ENCODE measurements at regions of chr22 and their contacts with region 1.

Region 1: GRCh38 chr22:35627264-35628041 is 10.3 kb upstream of the MB start:
- DNase-seq: peak; percentile 87
- ATAC-seq: peak; percentile 72 to 79

Region 2: GRCh38 chr22:35742342-35743100 is 115.1 kb after region 1 on chr22:
- intact Hi-C with region 1: loop called in 1 of 2 experiments (anchors 5 kb)
- DNase-seq: no peak
- ATAC-seq: peak; percentile 25 to 76

Region 3: GRCh38 chr22:35840302-35840739 is 212.9 kb after region 1 on chr22:
- intact Hi-C with region 1: loop called in 1 of 2 experiments (anchors 10 kb)
- DNase-seq: peak; percentile 89
- ATAC-seq: peak; percentile 87 to 94

Region 4: DNA sequence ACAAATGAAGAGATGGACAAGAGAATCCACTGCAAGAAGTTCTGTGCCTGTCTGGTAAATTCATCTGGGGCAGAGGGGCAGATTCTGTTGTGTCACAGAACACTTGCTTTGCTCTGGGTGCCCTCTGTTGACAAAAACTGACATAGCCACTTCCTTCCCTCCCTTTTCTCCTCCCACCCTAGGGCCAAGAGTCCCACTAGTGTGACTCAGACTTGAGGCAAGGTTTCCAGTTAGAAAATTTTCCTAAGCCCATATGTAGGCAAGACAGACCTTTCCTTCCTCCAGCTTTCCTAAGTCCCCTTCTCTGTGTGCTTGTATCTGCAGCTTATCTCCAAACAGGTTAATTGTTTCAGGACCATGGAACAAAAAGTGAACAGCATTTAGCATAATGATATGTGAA is 294.3 kb after region 1 on chr22:
- intact Hi-C with region 1: loop called (anchors 5 kb)
- DNase-seq: peak; percentile 64
- ATAC-seq: peak; percentile 86 to 92